Activated CD4-positive, alpha-beta T cell treated with anti-CD3 and anti-CD28 coated beads for 36 hours (primary cell): ENCODE measurements at regions of chr6 and their contacts with region 1.

Region 1: GRCh38 chr6:33788694-33789549 is at the start of gene LEMD2:
- DNase-seq: peak; percentile 93
- ATAC-seq: peak; percentile 87
- H3K4me3 Mint-ChIP-seq: peak within 1 kb of the TSS; percentile 96
- H3K27ac Mint-ChIP-seq: peak within 1 kb of the TSS; percentile 99
- H3K4me1 Mint-ChIP-seq: peaks cover 47% of the 10 kb centered on the region
- H3K27me3 Mint-ChIP-seq: no peaks in the 10 kb centered on the region
- total RNA-seq, gene LEMD2: 55.2 to 61.5 TPM

Region 2: DNA sequence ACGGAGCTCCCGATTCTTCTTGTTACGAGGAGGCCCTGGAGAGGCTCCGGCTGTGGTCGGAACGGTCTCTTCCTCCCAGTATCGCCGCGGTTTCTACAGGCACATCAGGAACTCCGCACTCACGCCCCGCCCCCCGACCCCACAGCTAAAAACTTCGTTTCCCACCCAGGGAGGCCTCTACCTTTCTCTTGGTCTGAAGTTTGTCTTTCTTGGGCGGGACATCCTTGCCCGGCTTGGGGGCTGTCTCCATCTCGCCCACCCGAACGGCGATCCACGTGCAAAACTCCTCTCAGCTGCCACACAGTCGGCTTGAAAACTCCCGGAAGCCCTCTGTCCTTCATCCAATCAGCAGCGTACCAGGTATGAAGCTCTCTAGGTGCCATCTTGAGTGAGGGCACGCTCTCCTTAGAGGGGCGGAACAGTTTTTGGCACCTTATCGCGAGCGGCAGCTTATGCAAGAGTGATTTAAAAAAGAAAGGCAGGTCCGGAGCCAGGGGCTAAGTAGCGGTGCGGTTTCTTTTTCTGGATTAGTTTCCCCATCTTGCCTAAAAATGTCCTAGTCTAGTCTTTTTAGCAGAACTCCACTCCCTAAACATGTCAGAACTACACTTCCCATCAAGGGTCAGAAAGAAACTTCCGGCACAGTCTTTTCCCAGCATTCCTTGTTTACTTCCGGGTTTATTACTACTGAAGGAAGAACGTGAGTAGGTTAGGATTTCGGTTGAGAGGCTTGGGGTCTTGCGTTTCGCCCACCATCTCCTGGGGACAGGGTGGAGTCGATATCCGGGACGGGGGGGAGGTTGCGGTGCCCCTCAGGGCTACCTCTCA is 499.8 kb before region 1 on chr6 and contains the starts of genes PFDN6 and WDR46:
- CTCF ChIA-PET with region 1: no interaction called
- POLR2A ChIA-PET with region 1: no interaction called
- intact Hi-C with region 1: loop called in 1 of 2 experiments (anchors 1 kb)
- DNase-seq: peak; percentile 87
- ATAC-seq: peak; percentile 98
- H3K4me3 Mint-ChIP-seq: peak within 1 kb of the TSS; percentile 98
- H3K27ac Mint-ChIP-seq: peak within 1 kb of the TSS; percentile 97
- H3K4me1 Mint-ChIP-seq: peaks cover 37% of the 10 kb centered on the region
- H3K27me3 Mint-ChIP-seq: no peaks in the 10 kb centered on the region
- total RNA-seq, gene PFDN6: 65.4 to 96.9 TPM
- total RNA-seq, gene WDR46: 63.5 to 69.4 TPM

Region 3: GRCh38 chr6:33579828-33580714 is 208.9 kb before region 1 on chr6 and contains the start of gene BAK1:
- CTCF ChIA-PET with region 1: no interaction called
- POLR2A ChIA-PET with region 1: no interaction called
- intact Hi-C with region 1: loop called in 1 of 2 experiments (anchors 2 kb)
- DNase-seq: peak; percentile 92
- ATAC-seq: peak; percentile 95
- H3K4me3 Mint-ChIP-seq: peak within 1 kb of the TSS; percentile 95
- H3K27ac Mint-ChIP-seq: peak within 1 kb of the TSS; percentile 98
- H3K4me1 Mint-ChIP-seq: peaks cover 31% of the 10 kb centered on the region
- H3K27me3 Mint-ChIP-seq: no peaks in the 10 kb centered on the region
- total RNA-seq, gene BAK1: 37.0 to 43.3 TPM

Region 4: DNA sequence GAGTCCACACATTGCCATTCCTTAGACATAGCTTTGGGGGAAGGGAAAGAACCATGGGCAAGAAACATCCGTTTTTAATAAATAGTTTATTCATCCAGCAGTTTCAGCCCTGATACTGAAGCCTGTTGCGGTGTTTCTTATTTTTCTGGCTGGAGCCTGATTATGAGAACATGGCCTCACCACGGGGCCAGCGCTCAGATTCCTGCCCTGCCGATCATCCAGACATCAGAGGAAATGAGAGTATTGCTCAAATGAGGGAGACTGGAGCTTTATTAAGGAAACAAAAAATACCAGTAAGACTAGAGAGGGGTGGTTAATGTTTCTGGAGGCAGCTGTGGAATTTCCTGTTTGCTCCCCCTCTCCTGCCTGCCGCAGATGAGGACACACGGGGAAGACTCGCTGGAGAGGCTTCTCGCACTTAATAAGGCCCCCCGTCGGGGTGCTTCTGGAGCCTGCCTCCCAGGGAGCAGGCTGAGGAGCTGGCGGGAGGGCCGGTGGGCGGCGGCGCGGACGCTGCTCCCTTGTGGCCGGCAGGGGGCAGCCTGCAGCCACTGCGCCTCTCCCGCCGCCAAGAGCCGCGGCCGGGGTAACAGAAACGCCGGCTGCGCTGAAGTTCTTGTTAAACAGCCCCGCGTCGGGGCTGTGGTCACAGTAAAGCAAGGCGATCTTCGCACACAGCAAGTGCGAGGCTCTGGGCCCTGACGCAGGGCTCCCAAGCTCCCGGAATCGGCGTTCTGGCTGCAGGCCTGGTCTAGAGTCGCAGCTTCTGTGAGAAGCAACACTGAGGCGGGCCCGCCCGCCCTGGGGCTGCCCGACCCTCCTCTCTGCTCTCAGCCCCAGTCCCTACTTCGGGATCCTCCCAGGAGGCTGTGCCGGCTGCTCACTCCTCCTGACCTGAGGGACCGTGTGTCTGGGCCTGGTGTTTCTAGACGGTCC is 17.5 kb before region 1 on chr6:
- CTCF ChIA-PET with region 1: interaction called, 22 read pairs
- POLR2A ChIA-PET with region 1: interaction called, 3 read pairs
- intact Hi-C with region 1: no loop called
- DNase-seq: peak; percentile 82
- ATAC-seq: peak; percentile 76
- H3K4me3 Mint-ChIP-seq: no peak overlapping the region
- H3K27ac Mint-ChIP-seq: no peak overlapping the region
- H3K4me1 Mint-ChIP-seq: peaks cover 2% of the 10 kb centered on the region
- H3K27me3 Mint-ChIP-seq: no peaks in the 10 kb centered on the region

Region 5: DNA sequence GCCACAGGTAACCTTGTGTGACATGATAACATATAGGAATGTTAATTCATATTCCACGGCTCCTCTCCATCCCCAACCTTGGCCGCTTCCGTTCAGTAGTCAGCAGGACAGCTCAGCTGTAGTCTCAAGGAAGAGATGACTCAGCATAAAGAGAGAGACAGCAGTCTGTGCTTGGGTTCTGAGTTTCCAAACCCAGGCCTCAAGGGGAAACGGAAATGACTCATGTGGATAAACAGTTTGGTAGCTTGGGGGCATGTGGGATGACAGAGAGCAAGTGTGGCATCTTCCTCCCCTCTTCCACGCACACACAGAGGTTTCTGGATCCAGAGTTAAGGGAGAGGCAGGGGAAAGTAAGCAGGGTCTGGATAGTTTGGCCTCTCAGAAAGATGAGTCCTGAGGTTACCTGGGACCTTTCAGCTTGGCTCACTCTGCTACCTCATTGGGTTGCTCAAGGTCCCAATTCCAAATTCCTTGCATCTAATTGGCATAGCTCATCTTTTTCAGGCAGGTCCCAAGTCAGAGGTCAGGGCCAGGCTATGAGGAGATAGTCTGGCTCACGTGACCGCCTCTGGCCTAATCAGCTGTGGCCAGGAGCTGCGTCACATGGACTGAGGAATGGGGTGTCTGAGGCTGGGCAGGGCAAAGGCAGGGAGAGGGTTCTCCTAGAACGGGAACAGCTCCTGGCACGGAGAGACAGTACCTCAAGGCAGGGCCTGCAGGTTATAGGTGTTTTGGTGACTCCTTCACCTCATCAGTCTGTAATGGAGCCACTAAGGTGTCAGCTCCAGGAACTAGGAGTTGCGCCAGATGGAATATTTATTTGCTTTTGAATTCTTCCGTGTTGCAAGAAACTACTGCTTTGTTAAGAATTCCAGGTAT is 51.4 kb after region 1 on chr6:
- CTCF ChIA-PET with region 1: no interaction called
- POLR2A ChIA-PET with region 1: no interaction called
- intact Hi-C with region 1: loop called in 1 of 2 experiments (anchors 2 kb)
- DNase-seq: peak; percentile 68
- ATAC-seq: peak; percentile 98
- H3K4me3 Mint-ChIP-seq: no peak overlapping the region
- H3K27ac Mint-ChIP-seq: peak overlapping the region; percentile 11
- H3K4me1 Mint-ChIP-seq: peaks cover 15% of the 10 kb centered on the region
- H3K27me3 Mint-ChIP-seq: no peaks in the 10 kb centered on the region

Region 6: GRCh38 chr6:35173427-35174087 is 1384.6 kb after region 1 on chr6:
- CTCF ChIA-PET with region 1: no interaction called
- POLR2A ChIA-PET with region 1: no interaction called
- intact Hi-C with region 1: no loop called
- DNase-seq: no peak
- ATAC-seq: no peak
- H3K4me3 Mint-ChIP-seq: no peak overlapping the region
- H3K27ac Mint-ChIP-seq: no peak overlapping the region
- H3K4me1 Mint-ChIP-seq: peaks cover 8% of the 10 kb centered on the region
- H3K27me3 Mint-ChIP-seq: peaks cover 8% of the 10 kb centered on the region